Heart right ventricle (tissue), 16 donors: ENCODE measurements at regions of chr11 and their contacts with region 1.

Region 1: DNA sequence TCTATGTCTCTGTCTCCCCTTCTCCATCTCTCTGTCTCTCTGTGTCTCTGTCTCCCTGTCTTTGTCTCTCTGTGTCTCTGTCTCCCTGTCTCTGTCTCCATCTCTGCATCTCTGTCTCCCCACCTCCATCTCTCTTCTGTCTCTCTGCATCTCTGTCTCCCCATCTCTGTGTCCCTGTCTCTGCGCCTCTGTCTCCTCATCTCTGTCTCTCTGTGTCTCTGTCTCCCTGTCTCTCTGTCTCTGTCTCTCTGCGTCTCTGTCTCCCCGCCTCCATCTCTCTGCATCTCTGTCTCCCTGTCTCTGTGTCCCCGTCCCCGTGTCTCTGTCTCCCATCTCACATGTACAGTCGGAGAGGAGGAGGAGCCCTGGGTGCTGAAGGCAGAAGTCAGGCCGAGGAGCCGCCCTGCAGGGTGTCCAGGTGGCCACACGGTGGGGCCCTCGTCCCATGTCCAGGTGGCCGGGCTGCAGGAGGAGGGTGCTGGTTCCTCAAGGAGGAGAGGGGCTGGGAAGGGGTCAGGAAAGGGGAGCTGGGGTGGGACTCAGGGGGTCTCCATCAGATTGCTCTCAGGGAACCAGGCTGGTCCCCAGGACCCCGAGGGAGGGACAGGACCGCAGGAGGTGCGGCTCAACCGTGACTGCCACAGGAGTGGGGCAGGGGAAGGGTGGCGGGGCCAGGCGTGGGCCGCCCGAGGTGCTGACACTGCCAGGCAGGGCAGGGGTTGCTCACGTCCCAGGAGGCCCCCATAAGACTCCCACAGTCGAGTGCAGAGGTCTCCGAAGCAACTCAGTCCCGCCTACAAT is 25.6 kb upstream of the TH start:
- DNase-seq: peak; percentile 66 to 76
- ATAC-seq: peak; percentile 59 to 86 (median 80)
- H3K4me3 ChIP-seq: no peak overlapping the region
- H3K27ac ChIP-seq: no peak overlapping the region
- H3K4me1 ChIP-seq: peaks cover 0 to 11% (median 0%) of the 10 kb centered on the region in 9 donors
- H3K27me3 ChIP-seq: peaks cover 0 to 12% (median 7%) of the 10 kb centered on the region in 7 donors
- CTCF ChIP-seq: peak; percentile 53 to 85 (median 81)

Region 2: GRCh38 chr11:2249189-2249916 is 52.2 kb after region 1 on chr11:
- intact Hi-C with region 1: no loop called
- DNase-seq: no peak
- ATAC-seq: no peak
- H3K4me3 ChIP-seq: no peak overlapping the region
- H3K27ac ChIP-seq: no peak overlapping the region
- H3K4me1 ChIP-seq: no peaks in the 10 kb centered on the region
- H3K27me3 ChIP-seq: peaks cover 0 to 22% (median 6%) of the 10 kb centered on the region in 7 donors
- CTCF ChIP-seq: no peak

Region 3: GRCh38 chr11:2260491-2261364 is 63.6 kb after region 1 on chr11:
- intact Hi-C with region 1: no loop called
- DNase-seq: peak in 1 of 2 donors; percentile 1
- ATAC-seq: no peak
- H3K4me3 ChIP-seq: no peak overlapping the region
- H3K27ac ChIP-seq: no peak overlapping the region
- H3K4me1 ChIP-seq: peaks cover 0 to 8% (median 0%) of the 10 kb centered on the region in 9 donors
- H3K27me3 ChIP-seq: peaks cover 0 to 35% (median 22%) of the 10 kb centered on the region in 7 donors
- CTCF ChIP-seq: no peak

Region 4: GRCh38 chr11:2287091-2287490 is 89.9 kb after region 1 on chr11:
- intact Hi-C with region 1: no loop called
- DNase-seq: peak in 1 of 2 donors; percentile 2
- ATAC-seq: no peak
- H3K4me3 ChIP-seq: no peak overlapping the region
- H3K27ac ChIP-seq: no peak overlapping the region
- H3K4me1 ChIP-seq: peaks cover 0 to 18% (median 7%) of the 10 kb centered on the region in 9 donors
- H3K27me3 ChIP-seq: peaks cover 0 to 6% (median 0%) of the 10 kb centered on the region in 7 donors
- CTCF ChIP-seq: no peak

Region 5: DNA sequence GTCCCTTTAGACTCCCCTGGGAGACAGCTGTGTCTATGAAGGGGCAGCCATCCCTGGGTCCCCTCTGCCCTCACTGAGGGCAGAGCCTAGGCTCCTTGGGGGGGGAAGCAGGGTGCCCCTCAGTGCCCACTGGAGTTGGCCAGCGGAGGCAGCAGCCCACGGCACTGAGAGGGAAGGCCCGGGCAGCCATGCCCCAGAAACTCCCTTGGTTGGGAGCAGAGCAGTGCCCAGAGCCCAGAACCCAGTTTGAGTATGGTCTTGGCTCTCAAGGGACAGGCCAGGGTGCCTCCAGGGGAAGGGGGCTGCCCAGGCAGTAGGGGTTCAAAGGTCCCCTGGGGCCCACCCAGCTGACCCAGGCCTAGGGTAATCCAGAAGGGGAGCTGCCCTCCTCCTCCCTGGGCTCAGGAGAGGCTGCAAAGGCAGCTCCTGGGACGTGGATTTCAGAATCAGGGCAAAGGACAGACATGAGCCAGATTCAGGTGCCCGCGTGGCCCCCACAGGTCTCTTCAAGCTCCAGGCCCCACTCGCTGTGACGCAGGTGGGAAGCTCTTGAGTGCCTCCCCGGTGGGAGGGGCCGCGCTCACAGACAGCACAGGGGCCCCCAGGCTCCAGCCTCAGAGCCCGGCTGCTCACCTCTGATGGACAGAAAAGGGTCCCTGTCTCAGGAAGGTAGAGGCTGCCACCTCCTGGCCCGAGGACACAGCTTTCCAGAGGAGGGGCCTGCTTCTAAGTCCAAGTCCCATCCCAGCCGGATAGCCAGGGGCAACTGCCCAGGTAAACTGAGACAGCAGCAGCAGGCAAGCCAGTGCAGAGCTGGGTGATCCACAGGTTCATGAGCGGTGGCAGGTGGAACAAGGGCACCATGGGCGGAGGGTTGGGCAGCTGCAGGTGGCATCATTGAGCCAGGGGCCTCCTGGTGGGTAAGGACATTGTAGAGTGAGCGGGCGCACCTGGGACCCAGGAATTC is 101.9 kb after region 1 on chr11:
- intact Hi-C with region 1: loop called in 8 of 10 experiments (anchors 1 to 5 kb)
- DNase-seq: no peak
- ATAC-seq: no peak
- H3K4me3 ChIP-seq: no peak overlapping the region
- H3K27ac ChIP-seq: peak overlapping the region in 3 of 10 donors; percentile 25 to 40 (median 31)
- H3K4me1 ChIP-seq: peaks cover 0 to 56% (median 14%) of the 10 kb centered on the region in 9 donors
- H3K27me3 ChIP-seq: no peaks in the 10 kb centered on the region
- CTCF ChIP-seq: peak in 7 of 9 donors; percentile 28 to 51 (median 38)

Region 6: DNA sequence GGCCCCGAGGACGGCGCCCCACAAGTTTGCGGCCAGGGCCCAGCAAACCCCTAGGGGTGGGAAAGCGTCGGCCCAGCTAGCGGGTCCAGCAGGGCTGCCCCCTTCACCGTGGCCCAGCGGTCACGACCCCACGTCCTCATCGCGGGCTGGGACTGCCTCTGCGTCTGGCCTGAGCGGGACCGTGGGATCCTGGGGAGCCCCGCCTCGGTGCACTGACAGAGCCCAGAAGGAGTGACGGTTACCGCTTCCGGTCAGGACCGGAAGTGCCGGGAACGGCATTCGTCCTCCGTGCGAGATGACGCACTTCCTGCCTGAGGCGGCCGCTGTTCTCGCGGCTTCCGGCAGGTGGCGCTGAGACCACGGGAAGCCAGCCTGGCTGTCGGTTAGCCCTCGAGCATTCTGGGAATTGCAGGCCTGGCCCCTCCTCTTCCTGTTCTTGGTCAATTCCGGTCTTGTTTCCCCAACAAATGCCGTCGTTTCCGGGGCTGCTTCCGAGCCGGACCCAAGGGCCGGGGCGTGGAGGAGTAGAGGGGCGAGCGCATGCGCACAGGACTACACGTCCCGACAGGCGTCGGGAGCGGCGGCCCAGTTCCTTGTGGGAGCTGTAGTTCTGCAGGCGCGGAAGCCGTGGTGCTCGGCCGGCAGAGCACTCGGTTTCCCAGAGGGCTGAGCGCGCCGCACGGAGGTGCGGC is 203.0 kb after region 1 on chr11 and contains the start of gene TSSC4:
- intact Hi-C with region 1: loop called in 1 of 10 experiments (anchors 5 kb)
- DNase-seq: peak; percentile 100
- ATAC-seq: peak; percentile 91 to 96 (median 93)
- H3K4me3 ChIP-seq: peak within 1 kb of the TSS; percentile 72 to 99 (median 92)
- H3K27ac ChIP-seq: peak within 1 kb of the TSS; percentile 96 to 100 (median 98)
- H3K4me1 ChIP-seq: peaks cover 19 to 32% (median 27%) of the 10 kb centered on the region in 9 donors
- H3K27me3 ChIP-seq: no peaks in the 10 kb centered on the region
- CTCF ChIP-seq: peak; percentile 94 to 100 (median 99)
- total RNA-seq, gene TSSC4: 22.0 to 46.4 (median 29.2) TPM

Region 7: DNA sequence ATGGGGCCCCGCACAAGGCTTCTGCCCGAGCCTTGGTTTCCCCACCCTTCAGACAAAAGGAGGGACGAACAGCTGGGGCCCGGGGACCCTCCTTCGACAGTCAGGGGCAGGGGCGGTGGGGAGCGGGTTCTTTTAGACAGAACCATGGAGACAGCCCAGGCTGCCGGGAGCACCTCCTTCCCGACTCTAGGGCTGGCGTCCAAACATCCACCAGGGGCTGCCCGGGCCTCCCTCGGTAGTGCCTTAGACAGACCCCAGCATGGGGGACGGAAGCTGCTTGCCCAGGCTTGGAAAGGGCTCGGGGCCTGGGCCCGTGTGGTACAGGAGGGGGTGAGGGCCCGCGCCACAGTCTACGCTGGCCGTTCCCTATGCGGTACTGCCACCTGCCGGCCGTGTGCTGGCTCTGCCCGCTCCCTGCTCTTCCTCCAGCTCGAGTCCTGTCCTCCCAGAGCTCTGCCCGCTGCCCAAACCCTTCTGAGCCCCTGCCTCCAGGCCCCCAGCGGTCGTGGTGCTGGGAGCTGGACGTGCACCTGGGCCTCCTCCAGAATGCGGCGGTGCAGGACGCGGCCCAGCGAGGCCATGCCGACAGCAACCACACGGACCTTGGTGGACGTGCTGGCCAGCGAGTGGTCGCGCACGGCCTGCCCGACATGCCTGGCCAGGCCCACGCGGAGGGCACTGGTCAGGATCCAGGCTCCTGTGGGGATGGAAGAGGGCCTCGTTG is 223.5 kb after region 1 on chr11:
- intact Hi-C with region 1: loop called (anchors 1 to 2 kb)
- DNase-seq: peak; percentile 65 to 83
- ATAC-seq: peak; percentile 89 to 97 (median 94)
- H3K4me3 ChIP-seq: peak overlapping the region in 4 of 10 donors; percentile 3 to 27 (median 12)
- H3K27ac ChIP-seq: no peak overlapping the region
- H3K4me1 ChIP-seq: peaks cover 0 to 15% (median 9%) of the 10 kb centered on the region in 9 donors
- H3K27me3 ChIP-seq: peaks cover 0 to 18% (median 6%) of the 10 kb centered on the region in 7 donors
- CTCF ChIP-seq: peak; percentile 83 to 97 (median 95)

Region 8: GRCh38 chr11:2526808-2527381 is 329.7 kb after region 1 on chr11:
- intact Hi-C with region 1: loop called in 6 of 10 experiments (anchors 10 kb)
- DNase-seq: peak; percentile 39 to 54
- ATAC-seq: peak in 6 of 8 donors; percentile 19 to 47 (median 30)
- H3K4me3 ChIP-seq: peak overlapping the region in 6 of 10 donors; percentile 2 to 34 (median 16)
- H3K27ac ChIP-seq: peak overlapping the region in 4 of 10 donors; percentile 39 to 64 (median 47)
- H3K4me1 ChIP-seq: peaks cover 7 to 30% (median 20%) of the 10 kb centered on the region in 9 donors
- H3K27me3 ChIP-seq: no peaks in the 10 kb centered on the region
- CTCF ChIP-seq: peak in 4 of 9 donors; percentile 19 to 32 (median 24)

Region 9: GRCh38 chr11:2532704-2533586 is 335.8 kb after region 1 on chr11:
- intact Hi-C with region 1: loop called in 6 of 10 experiments (anchors 10 kb)
- DNase-seq: peak; percentile 89 to 93
- ATAC-seq: peak; percentile 76 to 95 (median 88)
- H3K4me3 ChIP-seq: peak overlapping the region in 6 of 10 donors; percentile 23 to 48 (median 38)
- H3K27ac ChIP-seq: peak overlapping the region in 9 of 10 donors; percentile 1 to 69 (median 54)
- H3K4me1 ChIP-seq: peaks cover 13 to 28% (median 21%) of the 10 kb centered on the region in 9 donors
- H3K27me3 ChIP-seq: no peaks in the 10 kb centered on the region
- CTCF ChIP-seq: peak; percentile 99 to 100 (median 99)

Region 10: GRCh38 chr11:2892215-2893020 is 695.2 kb after region 1 on chr11:
- intact Hi-C with region 1: loop called in 3 of 10 experiments (anchors 10 kb)
- DNase-seq: peak; percentile 57 to 83
- ATAC-seq: peak; percentile 24 to 78 (median 64)
- H3K4me3 ChIP-seq: peak overlapping the region in 9 of 10 donors; percentile 41 to 63 (median 58)
- H3K27ac ChIP-seq: peak overlapping the region in 9 of 10 donors; percentile 25 to 89 (median 71)
- H3K4me1 ChIP-seq: peaks cover 6 to 42% (median 35%) of the 10 kb centered on the region in 9 donors
- H3K27me3 ChIP-seq: no peaks in the 10 kb centered on the region
- CTCF ChIP-seq: peak; percentile 91 to 97 (median 93)